ENCODE measurements at regions of chr17 and their contacts with region 1.

Region 1: GRCh38 chr17:66673668-66674315 is 161.1 kb upstream of the CACNG5 start:
- DNase-seq: peak; percentile 69
- H3K4me3 ChIP-seq: no peak overlapping the region
- H3K27ac ChIP-seq: no peak overlapping the region
- H3K4me1 ChIP-seq: peaks cover 53% of the 10 kb centered on the region
- H3K27me3 ChIP-seq: no peaks in the 10 kb centered on the region
- CTCF ChIP-seq: peak; percentile 81 to 94

Region 2: GRCh38 chr17:66200685-66201092 is 473.1 kb before region 1 on chr17:
- CTCF ChIA-PET with region 1: no interaction called
- dilution Hi-C with region 1: no loop called
- in situ Hi-C with region 1: no loop called
- intact Hi-C with region 1: loop called (anchors 1 kb)
- DNase-seq: peak; percentile 66
- H3K4me3 ChIP-seq: no peak overlapping the region
- H3K27ac ChIP-seq: no peak overlapping the region
- H3K4me1 ChIP-seq: no peaks in the 10 kb centered on the region
- H3K27me3 ChIP-seq: no peaks in the 10 kb centered on the region
- CTCF ChIP-seq: peak; percentile 67 to 70

Region 3: GRCh38 chr17:66301797-66302741 is 371.7 kb before region 1 on chr17 and contains the start of gene PRKCA:
- CTCF ChIA-PET with region 1: no interaction called
- dilution Hi-C with region 1: no loop called
- in situ Hi-C with region 1: no loop called
- intact Hi-C with region 1: loop called (anchors 1 kb)
- DNase-seq: peak; percentile 73
- H3K4me3 ChIP-seq: peak within 1 kb of the TSS; percentile 80 to 97 (median 84)
- H3K27ac ChIP-seq: peak within 1 kb of the TSS; percentile 14
- H3K4me1 ChIP-seq: peaks cover 15% of the 10 kb centered on the region
- H3K27me3 ChIP-seq: no peaks in the 10 kb centered on the region
- CTCF ChIP-seq: no peak
- total RNA-seq, gene PRKCA: 6.0 to 15.5 TPM

Region 4: DNA sequence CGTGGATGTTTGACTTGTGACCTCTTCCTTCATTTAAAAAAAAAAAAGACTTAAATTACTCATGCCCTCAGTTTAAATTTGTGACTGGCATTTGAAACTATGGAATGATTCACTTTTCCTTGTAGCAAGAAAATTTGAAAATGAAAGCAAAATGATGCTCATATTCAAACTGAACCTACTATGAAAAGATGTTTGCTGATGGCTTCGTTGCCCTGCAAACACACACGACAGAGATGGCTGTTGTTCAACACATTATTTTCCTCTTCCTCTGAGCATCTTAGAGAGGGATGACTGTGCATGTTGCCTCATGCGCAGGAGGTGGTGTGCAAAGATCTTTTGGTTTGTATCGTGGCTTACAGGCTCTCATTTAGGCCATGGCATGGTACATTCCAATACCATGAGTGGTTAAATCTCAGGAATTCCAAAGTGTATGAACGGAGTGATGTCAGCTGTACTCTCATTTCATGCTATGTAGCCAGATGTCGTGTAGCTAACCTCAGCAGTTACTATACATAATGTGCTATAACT is 206.9 kb before region 1 on chr17:
- CTCF ChIA-PET with region 1: no interaction called
- dilution Hi-C with region 1: no loop called
- in situ Hi-C with region 1: no loop called
- intact Hi-C with region 1: loop called (anchors 2 kb)
- DNase-seq: peak; percentile 98
- H3K4me3 ChIP-seq: peak overlapping the region in 1 of 3 experiments; percentile 21
- H3K27ac ChIP-seq: peak overlapping the region; percentile 83
- H3K4me1 ChIP-seq: peaks cover 43% of the 10 kb centered on the region
- H3K27me3 ChIP-seq: no peaks in the 10 kb centered on the region
- CTCF ChIP-seq: no peak

Region 5: GRCh38 chr17:66625311-66625775 is 48.4 kb before region 1 on chr17:
- CTCF ChIA-PET with region 1: no interaction called
- dilution Hi-C with region 1: no loop called
- in situ Hi-C with region 1: no loop called
- intact Hi-C with region 1: loop called (anchors 1 kb)
- DNase-seq: peak; percentile 19
- H3K4me3 ChIP-seq: no peak overlapping the region
- H3K27ac ChIP-seq: no peak overlapping the region
- H3K4me1 ChIP-seq: no peaks in the 10 kb centered on the region
- H3K27me3 ChIP-seq: no peaks in the 10 kb centered on the region
- CTCF ChIP-seq: peak; percentile 32 to 50

Region 6: GRCh38 chr17:66655861-66656260 is 17.9 kb before region 1 on chr17:
- CTCF ChIA-PET with region 1: no interaction called
- dilution Hi-C with region 1: no loop called
- in situ Hi-C with region 1: no loop called
- intact Hi-C with region 1: loop called (anchors 1 kb)
- DNase-seq: peak; percentile 96
- H3K4me3 ChIP-seq: no peak overlapping the region
- H3K27ac ChIP-seq: peak overlapping the region; percentile 49
- H3K4me1 ChIP-seq: peaks cover 45% of the 10 kb centered on the region
- H3K27me3 ChIP-seq: no peaks in the 10 kb centered on the region
- CTCF ChIP-seq: no peak

Measured in mammary epithelial cell (primary cell).